Activated CD4-positive, alpha-beta T cell treated with anti-CD3 and anti-CD28 coated beads for 36 hours (primary cell): ENCODE measurements at regions of chrX and their contacts with region 1.

Region 1: GRCh38 chrX:46836701-46837557 is at the start of gene RP2:
- DNase-seq: peak; percentile 90
- ATAC-seq: peak; percentile 96
- H3K4me3 Mint-ChIP-seq: peak within 1 kb of the TSS; percentile 95
- H3K27ac Mint-ChIP-seq: peak within 1 kb of the TSS; percentile 86
- H3K4me1 Mint-ChIP-seq: peaks cover 5% of the 10 kb centered on the region
- H3K27me3 Mint-ChIP-seq: no peaks in the 10 kb centered on the region
- total RNA-seq, gene RP2: 3.3 to 5.0 TPM

Region 2: GRCh38 chrX:46477435-46477834 is 359.5 kb before region 1 on chrX:
- CTCF ChIA-PET with region 1: no interaction called
- POLR2A ChIA-PET with region 1: no interaction called
- intact Hi-C with region 1: no loop called
- DNase-seq: no peak
- ATAC-seq: no peak
- H3K4me3 Mint-ChIP-seq: no peak overlapping the region
- H3K27ac Mint-ChIP-seq: no peak overlapping the region
- H3K4me1 Mint-ChIP-seq: no peaks in the 10 kb centered on the region
- H3K27me3 Mint-ChIP-seq: no peaks in the 10 kb centered on the region

Region 3: DNA sequence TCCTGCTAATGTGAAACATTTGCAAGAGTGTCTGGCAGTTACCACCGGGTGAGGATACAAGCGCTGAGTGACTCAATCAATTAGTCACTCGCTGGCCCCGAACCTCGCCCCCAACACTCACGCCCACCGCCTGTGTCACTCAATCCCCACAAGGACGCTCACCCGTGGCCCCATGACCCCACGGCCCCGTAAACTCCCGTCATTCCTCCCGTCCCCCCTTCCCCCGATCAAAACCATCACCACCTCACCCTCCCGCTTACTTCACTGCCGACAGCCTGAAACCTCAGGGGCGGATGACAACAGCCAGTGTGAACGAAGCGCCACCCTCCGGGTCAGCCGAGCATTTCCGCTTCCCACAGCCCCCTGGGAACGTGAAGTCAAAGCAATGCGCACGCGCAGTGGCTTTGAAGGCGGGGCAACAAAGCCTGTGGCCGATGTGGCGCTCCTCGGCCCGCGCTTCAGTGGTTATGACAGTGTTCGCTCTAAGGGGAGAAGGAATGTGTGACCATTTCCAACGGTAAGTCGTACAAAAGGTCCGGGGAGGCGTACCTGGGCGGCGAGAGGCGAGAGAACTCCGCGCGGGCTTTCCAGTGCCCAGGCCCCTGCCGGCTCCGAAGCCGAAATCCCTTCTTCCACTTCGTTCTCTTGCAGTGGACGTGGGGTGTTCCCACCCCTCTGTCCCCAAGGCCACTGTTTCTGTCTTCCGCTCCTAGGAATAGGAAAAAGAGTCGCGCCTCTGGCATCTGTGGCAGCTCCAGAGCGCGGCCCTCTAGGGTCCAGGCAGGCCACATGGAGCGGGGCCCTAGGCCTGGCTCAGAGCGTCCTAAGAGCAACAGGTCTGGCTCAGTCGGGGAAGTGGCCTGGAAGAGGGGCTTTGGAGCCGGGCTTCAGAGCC is 291.6 kb before region 1 on chrX and contains the start of gene ZNF674:
- CTCF ChIA-PET with region 1: no interaction called
- POLR2A ChIA-PET with region 1: no interaction called
- intact Hi-C with region 1: loop called in 1 of 2 experiments (anchors 1 kb)
- DNase-seq: peak; percentile 96
- ATAC-seq: peak; percentile 88
- H3K4me3 Mint-ChIP-seq: peak within 1 kb of the TSS; percentile 88
- H3K27ac Mint-ChIP-seq: peak within 1 kb of the TSS; percentile 94
- H3K4me1 Mint-ChIP-seq: peaks cover 32% of the 10 kb centered on the region
- H3K27me3 Mint-ChIP-seq: no peaks in the 10 kb centered on the region
- total RNA-seq, gene ZNF674: 2.0 to 2.6 TPM

Region 4: GRCh38 chrX:46796574-46797191 is 40.2 kb before region 1 on chrX:
- CTCF ChIA-PET with region 1: interaction called, 4 read pairs
- POLR2A ChIA-PET with region 1: no interaction called
- intact Hi-C with region 1: loop called in 1 of 2 experiments (anchors 2 kb)
- DNase-seq: peak; percentile 84
- ATAC-seq: peak; percentile 63
- H3K4me3 Mint-ChIP-seq: no peak overlapping the region
- H3K27ac Mint-ChIP-seq: no peak overlapping the region
- H3K4me1 Mint-ChIP-seq: peaks cover 19% of the 10 kb centered on the region
- H3K27me3 Mint-ChIP-seq: peaks cover 2% of the 10 kb centered on the region

Region 5: DNA sequence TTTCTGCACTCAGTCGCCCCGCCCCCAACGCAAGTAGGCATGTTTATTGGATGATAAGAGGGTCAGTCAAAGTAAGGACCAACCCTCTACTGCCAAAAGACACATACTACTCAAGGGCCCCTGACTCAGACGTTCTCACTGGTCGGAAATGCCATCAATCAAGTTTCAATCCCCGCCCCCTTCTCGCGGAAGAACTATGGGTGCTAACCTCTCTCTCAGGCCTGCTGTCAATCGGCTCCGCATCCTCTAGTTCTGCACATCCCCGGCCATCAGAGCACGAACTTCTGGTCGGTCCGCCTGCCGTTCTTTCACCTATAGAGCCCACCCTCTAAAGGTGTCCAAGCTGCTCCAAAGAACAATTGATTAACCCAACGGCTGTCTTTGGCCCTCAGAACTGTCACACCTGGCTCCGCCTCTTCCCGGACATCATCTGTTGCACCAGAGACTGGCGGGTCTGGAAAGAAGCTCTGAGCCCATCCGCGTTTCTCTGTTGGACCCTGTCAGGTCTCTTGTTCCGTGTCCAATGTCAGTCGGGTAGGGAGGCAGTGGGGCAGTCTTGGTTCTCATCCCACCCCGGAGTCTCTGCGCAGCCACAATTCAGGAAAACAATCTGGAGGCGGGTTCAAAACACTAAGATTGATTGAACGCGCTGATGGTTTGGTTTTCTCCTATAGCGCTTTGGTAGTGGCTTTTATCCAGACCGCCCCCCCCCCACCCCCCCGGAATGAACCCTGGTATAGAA is 292.4 kb after region 1 on chrX:
- CTCF ChIA-PET with region 1: no interaction called
- POLR2A ChIA-PET with region 1: interaction called, 3 read pairs
- intact Hi-C with region 1: loop called in 1 of 2 experiments (anchors 1 kb)
- DNase-seq: peak; percentile 91
- ATAC-seq: peak; percentile 100
- H3K4me3 Mint-ChIP-seq: peak overlapping the region; percentile 89
- H3K27ac Mint-ChIP-seq: peak overlapping the region; percentile 99
- H3K4me1 Mint-ChIP-seq: peaks cover 6% of the 10 kb centered on the region
- H3K27me3 Mint-ChIP-seq: no peaks in the 10 kb centered on the region

Region 6: GRCh38 chrX:47650164-47651042 is 813.5 kb after region 1 on chrX and contains the start of gene ELK1:
- CTCF ChIA-PET with region 1: no interaction called
- POLR2A ChIA-PET with region 1: no interaction called
- intact Hi-C with region 1: loop called in 1 of 2 experiments (anchors 10 kb)
- DNase-seq: peak; percentile 93
- ATAC-seq: peak; percentile 95
- H3K4me3 Mint-ChIP-seq: peak within 1 kb of the TSS; percentile 92
- H3K27ac Mint-ChIP-seq: peak within 1 kb of the TSS; percentile 97
- H3K4me1 Mint-ChIP-seq: peaks cover 44% of the 10 kb centered on the region
- H3K27me3 Mint-ChIP-seq: no peaks in the 10 kb centered on the region
- total RNA-seq, gene ELK1: 96.8 to 117 TPM